PC-3 (cell line): ENCODE measurements at regions of chr1 and their contacts with region 1.

Region 1: DNA sequence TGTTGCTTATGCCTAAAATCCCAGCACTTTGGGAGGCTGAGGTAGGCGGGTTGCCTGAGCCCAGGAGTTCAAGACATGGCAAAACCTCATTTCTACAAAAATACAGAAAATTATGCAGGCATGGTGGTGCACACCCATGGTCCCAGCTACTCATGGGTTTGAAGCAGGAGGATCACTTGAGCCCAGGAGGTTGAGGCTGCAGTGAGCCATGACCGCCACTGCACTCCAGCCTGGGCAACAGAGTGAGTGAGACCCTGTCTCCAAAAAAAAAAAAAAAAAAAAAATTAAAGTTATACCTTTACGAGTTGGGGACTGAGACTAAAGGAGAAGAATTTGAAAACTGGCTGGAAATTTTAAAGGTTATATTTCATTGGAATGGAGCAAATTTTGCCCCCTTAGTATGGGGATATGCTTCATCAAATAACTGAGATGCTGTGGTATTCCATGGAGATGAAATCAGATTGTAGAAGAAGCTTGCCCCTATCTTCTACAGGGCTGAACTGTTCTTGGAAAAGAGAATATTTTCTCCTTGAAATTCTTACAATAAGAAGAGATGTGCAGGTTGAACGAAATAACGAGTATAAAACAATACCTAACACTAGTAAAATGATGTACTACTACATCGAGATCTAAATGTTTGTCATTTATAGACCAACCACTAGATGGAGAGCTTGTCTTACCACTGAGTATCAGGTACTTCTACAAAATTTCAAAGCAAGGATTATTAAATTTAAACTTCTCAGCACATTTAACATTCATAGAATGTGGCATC is 34.9 kb upstream of the SCYL3 start:
- DNase-seq: peak; percentile 61
- ATAC-seq: peak; percentile 45; the same call in 1 of the 2 replicates
- H3K4me3 ChIP-seq: no peak overlapping the region
- H3K27ac ChIP-seq: no peak overlapping the region
- H3K4me1 ChIP-seq: peaks cover 17% of the 10 kb centered on the region
- H3K27me3 ChIP-seq: no peaks in the 10 kb centered on the region
- CTCF ChIP-seq: peak; percentile 79

Region 2: DNA sequence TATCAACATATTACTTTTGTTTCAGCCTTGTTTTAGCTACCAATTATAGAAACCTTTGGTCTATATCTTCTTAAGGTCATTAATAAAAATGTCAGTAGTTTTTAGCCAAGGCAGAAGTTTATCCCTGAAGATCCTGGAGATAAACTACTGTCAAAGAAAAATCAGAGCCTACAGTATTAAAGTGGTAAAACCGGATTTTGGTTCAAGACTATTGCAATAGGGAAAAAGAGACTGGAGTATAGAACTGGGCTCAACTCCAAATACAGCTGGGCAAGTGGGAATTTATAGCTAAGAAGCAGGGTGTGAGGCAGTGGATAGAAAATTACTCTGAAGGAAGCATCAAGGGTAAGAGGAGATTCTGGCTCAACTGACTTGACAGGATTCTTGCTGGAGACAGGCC is 207.5 kb after region 1 on chr1:
- CTCF ChIA-PET with region 1: no interaction called
- POLR2A ChIA-PET with region 1: no interaction called
- intact Hi-C with region 1: no loop called
- DNase-seq: peak; percentile 23
- ATAC-seq: no peak
- H3K4me3 ChIP-seq: no peak overlapping the region
- H3K27ac ChIP-seq: no peak overlapping the region
- H3K4me1 ChIP-seq: no peaks in the 10 kb centered on the region
- H3K27me3 ChIP-seq: no peaks in the 10 kb centered on the region
- CTCF ChIP-seq: no peak

Region 3: DNA sequence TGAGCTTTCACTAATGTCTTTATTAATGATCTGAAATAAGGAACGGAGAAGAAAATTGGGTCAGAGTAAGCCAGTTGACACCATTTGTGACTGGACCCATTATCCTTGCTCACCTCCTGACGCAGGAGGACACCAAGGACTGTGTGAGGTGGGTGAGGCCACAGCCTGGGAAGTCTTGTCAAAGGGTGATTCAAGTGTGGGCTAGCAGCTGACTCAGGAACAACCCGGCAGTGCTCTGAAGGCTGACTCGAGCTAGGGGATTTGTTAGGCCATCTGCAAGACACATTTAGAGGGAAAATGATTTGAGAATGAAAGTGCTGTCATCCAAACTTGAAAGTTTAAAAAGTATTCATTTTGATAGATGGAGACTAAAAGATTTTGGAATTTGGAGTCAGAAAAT is 756.5 kb after region 1 on chr1:
- CTCF ChIA-PET with region 1: no interaction called
- POLR2A ChIA-PET with region 1: no interaction called
- intact Hi-C with region 1: loop called (anchors 5 kb)
- DNase-seq: no peak
- ATAC-seq: no peak
- H3K4me3 ChIP-seq: no peak overlapping the region
- H3K27ac ChIP-seq: no peak overlapping the region
- H3K4me1 ChIP-seq: no peaks in the 10 kb centered on the region
- H3K27me3 ChIP-seq: no peaks in the 10 kb centered on the region
- CTCF ChIP-seq: no peak

Region 4: GRCh38 chr1:170765712-170766330 is 837.2 kb after region 1 on chr1:
- CTCF ChIA-PET with region 1: no interaction called
- POLR2A ChIA-PET with region 1: no interaction called
- intact Hi-C with region 1: loop called (anchors 2 kb)
- DNase-seq: peak; percentile 46
- ATAC-seq: peak; percentile 43
- H3K4me3 ChIP-seq: no peak overlapping the region
- H3K27ac ChIP-seq: no peak overlapping the region
- H3K4me1 ChIP-seq: no peaks in the 10 kb centered on the region
- H3K27me3 ChIP-seq: no peaks in the 10 kb centered on the region
- CTCF ChIP-seq: peak; percentile 70

Region 5: GRCh38 chr1:170929835-170930554 is 1001.4 kb after region 1 on chr1:
- CTCF ChIA-PET with region 1: no interaction called
- POLR2A ChIA-PET with region 1: no interaction called
- intact Hi-C with region 1: loop called (anchors 1 kb)
- DNase-seq: peak; percentile 84
- ATAC-seq: peak; percentile 98
- H3K4me3 ChIP-seq: no peak overlapping the region
- H3K27ac ChIP-seq: no peak overlapping the region
- H3K4me1 ChIP-seq: no peaks in the 10 kb centered on the region
- H3K27me3 ChIP-seq: peaks cover 37% of the 10 kb centered on the region
- CTCF ChIP-seq: peak; percentile 97